ENCODE measurements at regions of chr10 and their contacts with region 1.

Region 1: GRCh38 chr10:35443858-35444257 is 107.5 kb downstream of the CCNY start:
- DNase-seq: no peak
- H3K4me3 ChIP-seq: no peak overlapping the region
- H3K27ac ChIP-seq: no peak overlapping the region
- H3K4me1 ChIP-seq: peaks cover 11 to 15% of the 10 kb centered on the region in 2 donors
- H3K27me3 ChIP-seq: no peaks in the 10 kb centered on the region
- CTCF ChIP-seq: no peak
- POLR2A ChIP-seq: no peak

Region 2: GRCh38 chr10:35423505-35424306 is 20.2 kb before region 1 on chr10:
- intact Hi-C with region 1: loop called (anchors 1 kb)
- DNase-seq: no peak
- H3K4me3 ChIP-seq: no peak overlapping the region
- H3K27ac ChIP-seq: no peak overlapping the region
- H3K4me1 ChIP-seq: peaks cover 0 to 8% of the 10 kb centered on the region in 2 donors
- H3K27me3 ChIP-seq: no peaks in the 10 kb centered on the region
- CTCF ChIP-seq: no peak
- POLR2A ChIP-seq: no peak